ENCODE measurements at regions of chr5 and their contacts with region 1.

Region 1: GRCh38 chr5:173925448-173926071 is 37.4 kb downstream of the CPEB4 start:
- DNase-seq: peak; percentile 28
- CTCF ChIP-seq: peak; percentile 73

Region 2: GRCh38 chr5:173789031-173789920 is 136.3 kb before region 1 on chr5:
- CTCF ChIA-PET with region 1: interaction called, 12 read pairs
- POLR2A ChIA-PET with region 1: no interaction called
- DNase-seq: peak; percentile 54
- CTCF ChIP-seq: no peak

Region 3: GRCh38 chr5:173907686-173908371 is 17.7 kb before region 1 on chr5:
- CTCF ChIA-PET with region 1: interaction called, 29 read pairs
- POLR2A ChIA-PET with region 1: no interaction called
- DNase-seq: no peak
- CTCF ChIP-seq: no peak

Region 4: GRCh38 chr5:173941758-173942401 is 16.3 kb after region 1 on chr5:
- CTCF ChIA-PET with region 1: interaction called, 63 read pairs
- POLR2A ChIA-PET with region 1: no interaction called
- DNase-seq: no peak
- CTCF ChIP-seq: no peak

Region 5: GRCh38 chr5:174145821-174146220 is 220.3 kb after region 1 on chr5:
- CTCF ChIA-PET with region 1: no interaction called
- POLR2A ChIA-PET with region 1: no interaction called
- DNase-seq: no peak
- CTCF ChIP-seq: no peak